GM23248 (cell line): ENCODE measurements at regions of chr1 and their contacts with region 1.

Region 1: GRCh38 chr1:94854458-94855306 is 34.5 kb downstream of the SLC44A3 start:
- DNase-seq: peak; percentile 97
- H3K4me3 ChIP-seq: peak overlapping the region; percentile 73
- H3K27ac ChIP-seq: peak overlapping the region; percentile 68
- H3K4me1 ChIP-seq: peaks cover 15% of the 10 kb centered on the region
- H3K27me3 ChIP-seq: no peaks in the 10 kb centered on the region

Region 2: GRCh38 chr1:94719926-94720793 is 134.5 kb before region 1 on chr1:
- in situ Hi-C with region 1: no loop called
- DNase-seq: peak; percentile 38
- H3K4me3 ChIP-seq: no peak overlapping the region
- H3K27ac ChIP-seq: no peak overlapping the region
- H3K4me1 ChIP-seq: no peaks in the 10 kb centered on the region; the same call in 1 of the 2 replicates
- H3K27me3 ChIP-seq: no peaks in the 10 kb centered on the region

Region 3: DNA sequence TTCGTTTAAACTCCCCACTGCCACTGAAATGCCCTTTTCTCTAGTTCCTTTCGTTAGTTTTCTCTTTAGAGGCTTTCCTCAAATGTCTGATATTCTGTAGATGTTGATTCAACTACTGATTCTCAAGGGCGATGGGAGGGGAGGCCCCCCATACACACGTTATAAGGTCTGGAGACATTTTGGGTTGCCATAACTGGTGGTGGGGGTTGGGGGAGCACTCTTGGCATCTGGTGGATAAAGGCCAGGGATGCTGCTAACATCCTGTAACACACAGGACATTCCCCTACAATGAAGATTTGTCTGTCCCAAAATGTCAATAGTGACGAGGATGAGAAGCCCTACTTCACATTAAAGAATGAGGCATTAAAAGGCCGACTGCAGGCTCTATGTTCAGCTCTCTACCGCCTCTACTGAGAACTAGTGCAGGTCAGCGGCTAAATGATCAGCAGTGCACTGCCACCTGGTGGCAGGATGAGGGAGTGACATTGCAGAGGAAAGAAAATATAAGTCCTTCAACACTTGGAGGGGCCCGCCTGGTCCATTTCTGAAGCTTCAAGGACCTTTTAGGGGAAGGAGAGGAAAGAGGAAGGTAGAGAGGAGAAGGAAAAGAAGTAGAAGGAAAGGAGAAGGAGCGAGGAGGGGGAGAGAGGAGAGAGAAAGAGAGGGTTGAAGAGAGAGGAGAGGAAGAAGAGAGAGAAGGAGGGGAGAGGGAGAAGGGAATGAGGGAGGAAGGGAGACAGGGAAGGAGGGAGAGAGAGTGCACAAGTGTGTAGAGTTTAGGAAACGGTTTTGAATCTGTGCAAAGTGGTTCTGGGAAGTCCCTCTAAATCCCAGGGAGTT is 188.7 kb after region 1 on chr1:
- in situ Hi-C with region 1: loop called (anchors 5 kb)
- DNase-seq: peak; percentile 92
- H3K4me3 ChIP-seq: peak overlapping the region; percentile 51
- H3K27ac ChIP-seq: peak overlapping the region; percentile 56
- H3K4me1 ChIP-seq: peaks cover 18% of the 10 kb centered on the region
- H3K27me3 ChIP-seq: no peaks in the 10 kb centered on the region

Region 4: GRCh38 chr1:95146637-95147036 is 292.0 kb after region 1 on chr1:
- in situ Hi-C with region 1: no loop called
- DNase-seq: no peak
- H3K4me3 ChIP-seq: no peak overlapping the region
- H3K27ac ChIP-seq: no peak overlapping the region
- H3K4me1 ChIP-seq: no peaks in the 10 kb centered on the region
- H3K27me3 ChIP-seq: no peaks in the 10 kb centered on the region

Region 5: DNA sequence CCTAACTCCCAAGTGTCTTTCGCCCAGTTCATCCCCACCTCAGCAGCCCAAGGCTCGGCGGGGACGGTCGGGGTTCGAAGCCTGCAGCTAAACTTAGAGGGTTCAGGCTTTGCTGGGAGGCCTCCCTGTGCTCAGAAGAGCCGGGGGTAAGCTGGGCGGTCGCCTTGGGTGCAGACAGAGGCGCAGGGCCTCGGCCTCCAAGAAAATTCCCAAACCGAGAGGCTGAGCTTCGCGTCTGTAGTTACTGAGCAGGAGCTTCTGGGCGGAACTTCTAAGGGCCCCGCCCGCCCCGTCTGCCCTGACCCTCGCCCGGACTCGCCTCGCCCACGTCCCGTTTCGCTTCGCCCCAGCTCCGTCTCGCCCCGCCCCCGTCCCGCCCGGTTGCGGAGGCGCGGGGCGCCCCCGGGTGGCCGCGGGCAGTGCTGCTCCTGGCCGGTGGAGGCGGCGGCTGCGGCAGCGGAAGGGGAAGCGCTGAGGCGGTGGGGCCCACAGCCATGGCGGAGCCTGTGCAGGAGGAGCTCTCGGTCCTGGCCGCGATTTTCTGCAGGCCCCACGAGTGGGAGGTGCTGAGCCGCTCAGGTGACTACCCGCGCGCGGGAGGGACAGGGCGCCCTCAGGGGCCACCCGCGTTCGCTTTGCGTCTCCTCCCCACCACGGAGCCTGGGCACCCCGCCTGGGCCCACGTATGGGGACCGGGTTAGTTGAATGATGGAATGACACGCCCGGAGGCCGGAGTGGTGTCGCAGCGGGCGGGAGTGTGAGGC is 379.2 kb after region 1 on chr1 and contains the start of gene RWDD3:
- in situ Hi-C with region 1: loop called (anchors 25 kb)
- DNase-seq: peak; percentile 97
- H3K4me3 ChIP-seq: peak within 1 kb of the TSS; percentile 90
- H3K27ac ChIP-seq: peak within 1 kb of the TSS; percentile 64
- H3K4me1 ChIP-seq: peaks cover 14% of the 10 kb centered on the region
- H3K27me3 ChIP-seq: no peaks in the 10 kb centered on the region
- total RNA-seq, gene RWDD3: 13.6 and 16.6 TPM in 2 replicates